Dendritic cell treated with granulocyte-macrophage colony-stimulating factor and Interleukin-4, amounts not matched to agents 40 ng/mL and 50 ng/mL, for 4 days (primary cell): ENCODE measurements at regions of chr3 and their contacts with region 1.

Region 1: DNA sequence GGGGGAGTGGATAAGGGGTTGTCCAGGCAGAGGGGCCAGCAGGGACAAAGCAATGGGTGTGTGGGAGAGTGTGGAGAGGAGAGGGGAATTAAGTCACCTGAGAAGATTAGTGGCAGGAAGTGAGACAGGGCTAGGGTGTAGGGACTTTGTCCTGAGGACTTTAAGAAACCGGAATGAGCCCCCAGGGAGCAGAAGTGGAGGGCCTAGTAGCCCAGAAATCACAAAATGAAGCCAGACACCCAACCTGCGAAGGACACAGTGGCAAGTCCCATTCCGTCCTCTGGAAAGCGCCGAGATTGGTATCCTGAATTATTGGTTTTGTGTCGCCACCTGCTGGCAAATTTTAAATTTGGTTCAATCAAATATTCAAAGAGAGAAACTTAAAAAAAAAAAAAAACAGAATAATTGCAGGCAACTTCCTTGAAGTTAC is 78.0 kb upstream of the SLC25A36 start:
- H3K4me3 Mint-ChIP-seq: no peak overlapping the region
- H3K27ac Mint-ChIP-seq: no peak overlapping the region
- H3K4me1 Mint-ChIP-seq: peaks cover 6% of the 10 kb centered on the region
- H3K27me3 Mint-ChIP-seq: peaks cover 8% of the 10 kb centered on the region

Region 2: GRCh38 chr3:139935016-139935865 is 928.4 kb before region 1 on chr3 and contains the start of gene CLSTN2:
- intact Hi-C with region 1: loop called (anchors 5 kb)
- H3K4me3 Mint-ChIP-seq: peak within 1 kb of the TSS; percentile 61
- H3K27ac Mint-ChIP-seq: no peak within 1 kb of the TSS
- H3K4me1 Mint-ChIP-seq: peaks cover 18% of the 10 kb centered on the region
- H3K27me3 Mint-ChIP-seq: peaks cover 64% of the 10 kb centered on the region

Region 3: DNA sequence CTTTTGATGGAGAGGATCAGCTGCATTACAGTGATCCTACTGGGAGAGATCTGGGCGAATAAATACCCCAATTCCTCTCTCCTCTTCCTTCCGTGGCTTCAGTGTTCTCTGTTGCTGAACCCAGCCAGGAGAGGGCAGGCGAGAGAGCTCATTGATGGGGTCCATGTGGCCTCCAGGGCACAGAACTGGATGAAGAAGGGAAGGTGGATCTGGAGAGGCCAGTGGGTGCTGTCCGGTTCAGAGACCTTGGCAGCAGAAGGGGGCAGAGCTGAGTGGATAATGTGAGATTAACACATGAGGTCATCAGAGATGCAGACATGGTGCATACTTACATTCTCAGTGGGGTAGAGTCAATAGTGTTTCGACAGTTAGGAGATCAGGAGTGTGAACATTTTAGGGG is 735.0 kb before region 1 on chr3:
- intact Hi-C with region 1: loop called (anchors 5 kb)
- H3K4me3 Mint-ChIP-seq: no peak overlapping the region
- H3K27ac Mint-ChIP-seq: no peak overlapping the region
- H3K4me1 Mint-ChIP-seq: no peaks in the 10 kb centered on the region
- H3K27me3 Mint-ChIP-seq: no peaks in the 10 kb centered on the region

Region 4: GRCh38 chr3:140406655-140407054 is 456.9 kb before region 1 on chr3:
- intact Hi-C with region 1: no loop called
- H3K4me3 Mint-ChIP-seq: no peak overlapping the region
- H3K27ac Mint-ChIP-seq: no peak overlapping the region
- H3K4me1 Mint-ChIP-seq: peaks cover 6% of the 10 kb centered on the region
- H3K27me3 Mint-ChIP-seq: no peaks in the 10 kb centered on the region

Region 5: GRCh38 chr3:140748903-140749302 is 114.7 kb before region 1 on chr3:
- intact Hi-C with region 1: loop called (anchors 10 kb)
- H3K4me3 Mint-ChIP-seq: no peak overlapping the region
- H3K27ac Mint-ChIP-seq: no peak overlapping the region
- H3K4me1 Mint-ChIP-seq: peaks cover 8% of the 10 kb centered on the region
- H3K27me3 Mint-ChIP-seq: peaks cover 26% of the 10 kb centered on the region